Ascending aorta (tissue), 2 donors: ENCODE measurements at regions of chr5 and their contacts with region 1.

Region 1: GRCh38 chr5:55994574-55995333 is at the start of gene IL6ST:
- DNase-seq: peak; percentile 85 to 98
- H3K4me3 ChIP-seq: peak within 1 kb of the TSS; percentile 95 to 98
- H3K27ac ChIP-seq: peak within 1 kb of the TSS; percentile 99 to 100
- H3K4me1 ChIP-seq: peaks cover 0 to 11% of the 10 kb centered on the region in 2 donors
- H3K27me3 ChIP-seq: no peaks in the 10 kb centered on the region
- CTCF ChIP-seq: peak in 1 of 3 experiments; percentile 6
- total RNA-seq, gene IL6ST: 192 TPM

Region 2: DNA sequence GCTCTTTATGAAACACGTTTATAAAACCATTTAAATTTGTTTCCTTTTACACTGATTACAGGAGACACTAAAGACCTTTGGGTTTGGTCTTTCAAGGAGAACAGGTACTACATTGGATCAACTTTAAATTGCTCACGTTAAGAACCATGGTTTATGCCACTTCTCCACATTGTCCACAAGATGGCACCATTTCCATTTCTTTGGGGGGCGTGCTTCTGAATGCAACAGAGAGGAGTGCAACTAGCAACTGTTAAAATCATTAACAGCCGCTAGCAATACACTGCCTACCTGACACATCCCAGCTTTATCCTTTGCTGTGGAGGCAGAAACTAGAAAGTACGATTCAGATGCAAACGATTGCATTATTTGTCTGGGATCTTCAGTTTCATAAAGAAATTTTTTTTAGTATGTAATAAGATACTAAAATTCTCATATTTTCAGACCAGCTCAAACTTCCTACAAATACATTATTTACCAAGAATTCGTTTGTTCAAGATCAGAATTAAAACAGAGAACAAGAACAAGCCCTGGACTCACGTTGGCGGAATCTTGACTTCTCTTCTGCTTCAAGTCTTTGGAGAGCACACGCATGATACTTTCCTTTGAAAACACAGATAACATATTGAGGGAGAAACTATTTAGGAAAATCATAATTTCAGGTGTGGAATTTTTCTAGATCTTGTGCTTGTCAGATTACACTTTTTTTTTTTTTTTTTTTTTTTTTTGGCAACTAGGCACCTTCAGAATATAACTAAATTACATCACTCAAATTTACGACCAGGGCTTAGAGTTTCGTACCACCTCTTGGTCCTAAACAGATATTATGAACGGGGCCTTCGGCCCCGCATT is 822.5 kb before region 1 on chr5:
- intact Hi-C with region 1: loop called (anchors 2 kb)
- DNase-seq: peak in 1 of 2 donors; percentile 78
- H3K4me3 ChIP-seq: peak overlapping the region; percentile 57 to 64
- H3K27ac ChIP-seq: no peak overlapping the region
- H3K4me1 ChIP-seq: peaks cover 0 to 8% of the 10 kb centered on the region in 2 donors
- H3K27me3 ChIP-seq: peaks cover 6% of the 10 kb centered on the region
- CTCF ChIP-seq: peak; percentile 47 to 80 (median 65)

Region 3: GRCh38 chr5:55546947-55547346 is 447.8 kb before region 1 on chr5:
- intact Hi-C with region 1: no loop called
- DNase-seq: no peak
- H3K4me3 ChIP-seq: no peak overlapping the region
- H3K27ac ChIP-seq: no peak overlapping the region
- H3K4me1 ChIP-seq: no peaks in the 10 kb centered on the region
- H3K27me3 ChIP-seq: no peaks in the 10 kb centered on the region
- CTCF ChIP-seq: no peak

Region 4: DNA sequence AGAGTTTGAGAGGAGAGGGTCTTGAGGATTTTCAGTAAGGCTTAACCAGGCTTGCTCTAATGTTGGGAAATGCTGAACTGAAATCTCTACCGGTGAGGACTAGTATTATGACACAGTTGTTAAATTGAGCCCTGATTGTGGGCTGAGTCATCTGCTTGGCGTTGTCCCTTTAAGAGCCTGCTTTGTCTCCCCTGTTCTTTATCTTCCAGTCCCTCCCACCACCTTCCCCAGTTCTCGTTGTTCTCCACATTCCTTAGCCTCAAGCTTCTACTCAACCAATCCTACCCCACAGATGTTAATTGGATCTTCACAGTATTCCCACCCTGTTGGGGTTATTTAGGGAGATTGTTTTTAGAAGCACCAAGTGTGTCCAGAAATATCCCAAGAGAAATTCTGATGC is 180.7 kb after region 1 on chr5:
- intact Hi-C with region 1: loop called (anchors 10 kb)
- DNase-seq: peak in 1 of 2 donors; percentile 73
- H3K4me3 ChIP-seq: no peak overlapping the region
- H3K27ac ChIP-seq: no peak overlapping the region
- H3K4me1 ChIP-seq: peaks cover 0 to 6% of the 10 kb centered on the region in 2 donors
- H3K27me3 ChIP-seq: no peaks in the 10 kb centered on the region
- CTCF ChIP-seq: no peak

Region 5: GRCh38 chr5:56206126-56206910 is 211.6 kb after region 1 on chr5:
- intact Hi-C with region 1: loop called (anchors 5 kb)
- DNase-seq: no peak
- H3K4me3 ChIP-seq: no peak overlapping the region
- H3K27ac ChIP-seq: peak overlapping the region in 1 of 2 donors; percentile 36
- H3K4me1 ChIP-seq: peaks cover 2% of the 10 kb centered on the region in 2 donors
- H3K27me3 ChIP-seq: no peaks in the 10 kb centered on the region
- CTCF ChIP-seq: no peak

Region 6: GRCh38 chr5:56909294-56910209 is 914.8 kb after region 1 on chr5 and contains the start of gene SETD9:
- intact Hi-C with region 1: loop called (anchors 1 kb)
- DNase-seq: peak; percentile 90 to 99
- H3K4me3 ChIP-seq: peak within 1 kb of the TSS; percentile 63 to 92
- H3K27ac ChIP-seq: peak within 1 kb of the TSS; percentile 90 to 99
- H3K4me1 ChIP-seq: peaks cover 2 to 6% of the 10 kb centered on the region in 2 donors
- H3K27me3 ChIP-seq: no peaks in the 10 kb centered on the region
- CTCF ChIP-seq: no peak
- total RNA-seq, gene SETD9: 16.8 TPM